ENCODE measurements at regions of chr3 and their contacts with region 1.

Region 1: GRCh38 chr3:159260049-159260662 is 458.3 kb downstream of the MFSD1 start:
- DNase-seq: peak; percentile 2
- H3K4me3 Mint-ChIP-seq: no peak overlapping the region
- H3K27ac Mint-ChIP-seq: no peak overlapping the region
- H3K4me1 Mint-ChIP-seq: no peaks in the 10 kb centered on the region
- H3K27me3 Mint-ChIP-seq: peaks cover 4% of the 10 kb centered on the region

Region 2: GRCh38 chr3:158727206-158728060 is 532.7 kb before region 1 on chr3:
- intact Hi-C with region 1: loop called (anchors 1 kb)
- DNase-seq: peak; percentile 36
- H3K4me3 Mint-ChIP-seq: peak overlapping the region; percentile 47
- H3K27ac Mint-ChIP-seq: peak overlapping the region; percentile 6
- H3K4me1 Mint-ChIP-seq: peaks cover 37% of the 10 kb centered on the region
- H3K27me3 Mint-ChIP-seq: no peaks in the 10 kb centered on the region

Region 3: DNA sequence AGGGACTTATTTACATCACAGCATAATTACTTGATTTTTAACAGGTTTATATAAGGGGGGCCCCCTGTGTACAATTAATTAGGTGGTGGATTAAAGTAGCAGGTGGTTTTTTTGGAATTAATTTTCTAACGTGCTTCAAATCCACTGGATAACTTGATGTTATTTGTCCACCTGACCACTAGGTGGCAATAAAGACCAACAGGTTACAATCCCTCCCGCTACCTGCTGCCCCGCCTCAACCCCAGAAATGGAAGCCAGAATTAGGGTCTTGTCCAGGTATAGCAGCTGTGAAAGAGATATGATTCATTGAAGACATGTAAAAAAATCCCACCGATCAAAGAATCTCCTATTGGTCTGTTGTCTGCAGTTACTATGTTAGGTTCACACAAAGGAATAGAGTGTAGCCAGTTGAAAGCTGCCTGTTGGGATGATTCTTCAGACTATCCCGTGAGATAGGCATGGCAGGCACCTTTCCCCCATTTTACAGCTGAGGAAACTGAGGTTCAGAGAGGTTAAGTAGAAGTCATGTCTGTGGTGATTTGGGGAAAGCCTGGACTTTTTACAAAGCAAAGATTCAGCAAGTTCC is 414.3 kb before region 1 on chr3:
- intact Hi-C with region 1: loop called (anchors 1 kb)
- DNase-seq: peak; percentile 9
- H3K4me3 Mint-ChIP-seq: no peak overlapping the region
- H3K27ac Mint-ChIP-seq: no peak overlapping the region
- H3K4me1 Mint-ChIP-seq: peaks cover 19% of the 10 kb centered on the region
- H3K27me3 Mint-ChIP-seq: peaks cover 2% of the 10 kb centered on the region

Region 4: DNA sequence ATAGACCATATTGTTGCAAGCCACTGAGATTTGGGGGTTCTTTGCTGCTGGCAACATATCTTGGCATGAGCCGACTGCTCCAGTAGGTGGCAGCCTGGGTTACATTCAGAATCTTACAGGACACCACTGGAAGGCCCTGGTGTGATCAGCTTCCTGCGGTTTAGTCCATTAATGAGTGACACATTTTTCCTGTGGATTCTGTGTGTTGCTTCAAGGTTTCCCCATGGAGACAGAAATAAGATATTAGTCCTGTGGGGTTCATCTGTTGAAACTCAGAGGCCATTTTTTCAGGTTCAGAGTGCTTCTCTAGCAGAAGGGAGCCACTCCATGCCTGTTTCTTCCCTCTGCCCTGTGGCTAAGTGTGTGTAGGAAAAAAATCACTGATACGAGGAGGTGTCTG is 342.1 kb before region 1 on chr3:
- intact Hi-C with region 1: loop called (anchors 2 kb)
- DNase-seq: no peak
- H3K4me3 Mint-ChIP-seq: no peak overlapping the region
- H3K27ac Mint-ChIP-seq: no peak overlapping the region
- H3K4me1 Mint-ChIP-seq: no peaks in the 10 kb centered on the region
- H3K27me3 Mint-ChIP-seq: no peaks in the 10 kb centered on the region

Region 5: DNA sequence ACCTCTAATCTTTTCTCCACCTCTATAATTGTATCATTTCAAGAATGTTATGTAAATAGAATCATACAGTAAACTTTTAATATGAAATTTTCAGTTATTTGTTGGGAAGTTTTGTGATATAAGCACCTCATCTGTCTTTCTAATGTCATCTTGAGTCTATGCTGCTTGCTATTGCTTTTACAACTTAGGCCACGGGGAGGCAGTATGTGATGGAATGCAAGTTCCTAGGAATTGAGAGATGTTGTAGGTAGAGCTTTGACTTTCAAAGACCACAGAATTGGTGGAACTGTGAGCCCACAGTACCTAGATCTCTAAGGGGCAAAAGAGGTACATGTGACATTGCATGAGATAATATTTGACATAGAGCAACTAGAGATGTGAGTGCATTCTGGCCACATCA is 130.0 kb before region 1 on chr3:
- intact Hi-C with region 1: loop called (anchors 1 kb)
- DNase-seq: no peak
- H3K4me3 Mint-ChIP-seq: no peak overlapping the region
- H3K27ac Mint-ChIP-seq: no peak overlapping the region
- H3K4me1 Mint-ChIP-seq: no peaks in the 10 kb centered on the region
- H3K27me3 Mint-ChIP-seq: no peaks in the 10 kb centered on the region

Region 6: GRCh38 chr3:159804726-159805410 is 544.7 kb after region 1 on chr3:
- intact Hi-C with region 1: loop called (anchors 1 kb)
- DNase-seq: peak; percentile 14
- H3K4me3 Mint-ChIP-seq: no peak overlapping the region
- H3K27ac Mint-ChIP-seq: no peak overlapping the region
- H3K4me1 Mint-ChIP-seq: no peaks in the 10 kb centered on the region
- H3K27me3 Mint-ChIP-seq: peaks cover 2% of the 10 kb centered on the region

Region 7: GRCh38 chr3:160486459-160486869 is 1226.3 kb after region 1 on chr3:
- intact Hi-C with region 1: loop called (anchors 5 kb)
- DNase-seq: no peak
- H3K4me3 Mint-ChIP-seq: peak overlapping the region; percentile 78
- H3K27ac Mint-ChIP-seq: no peak overlapping the region
- H3K4me1 Mint-ChIP-seq: peaks cover 5% of the 10 kb centered on the region
- H3K27me3 Mint-ChIP-seq: peaks cover 2% of the 10 kb centered on the region